ENCODE measurements at regions of chr11 and their contacts with region 1.

Region 1: DNA sequence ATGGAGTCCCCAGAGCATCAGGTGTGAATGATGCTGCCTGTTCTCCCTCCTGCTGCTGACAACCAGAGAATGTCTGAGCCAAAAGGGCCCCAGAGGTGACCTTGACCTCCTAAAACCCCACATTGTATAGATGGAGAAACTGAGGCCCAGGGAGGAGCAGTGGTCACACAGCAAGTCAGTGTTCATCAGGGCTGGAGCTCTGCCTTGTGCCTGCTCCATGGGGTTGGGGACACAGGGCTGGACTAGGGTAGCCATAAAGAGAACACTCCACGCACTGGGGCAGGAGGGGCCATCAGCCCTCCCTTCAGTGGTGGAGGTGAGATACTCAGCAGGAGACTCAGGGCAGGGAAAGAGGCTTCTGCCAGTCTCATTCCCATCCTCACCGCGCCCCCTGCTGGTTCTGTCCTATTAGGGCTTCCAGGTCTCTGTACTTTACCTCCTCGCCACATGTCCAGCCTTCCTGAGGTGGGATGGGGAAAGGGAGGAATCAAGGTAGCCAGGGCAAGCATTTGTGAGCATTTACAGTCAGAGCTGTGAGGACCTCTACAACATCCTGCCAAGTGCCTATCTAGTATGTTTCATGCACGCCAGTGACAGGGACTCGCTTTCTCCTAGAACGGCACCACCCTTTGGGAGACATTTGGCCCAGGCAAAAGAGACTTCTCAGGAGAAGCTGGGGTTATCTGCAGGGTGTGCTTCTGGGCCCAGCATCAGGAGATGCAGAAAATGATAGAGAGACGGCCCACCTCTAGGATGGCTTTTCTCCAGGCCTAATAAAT is 43.2 kb downstream of the NEU3 start:
- DNase-seq: peak; percentile 78
- ATAC-seq: peak; percentile 86
- H3K4me3 ChIP-seq: no peak overlapping the region
- H3K27ac ChIP-seq: peak overlapping the region; percentile 36; the same call in 1 of the 2 replicates
- H3K4me1 ChIP-seq: peaks cover 14% of the 10 kb centered on the region
- H3K27me3 ChIP-seq: peaks cover 9% of the 10 kb centered on the region
- CTCF ChIP-seq: peak; percentile 83
- POLR2A ChIP-seq: no peak
- RAD21 ChIP-seq: peak; percentile 73

Region 2: DNA sequence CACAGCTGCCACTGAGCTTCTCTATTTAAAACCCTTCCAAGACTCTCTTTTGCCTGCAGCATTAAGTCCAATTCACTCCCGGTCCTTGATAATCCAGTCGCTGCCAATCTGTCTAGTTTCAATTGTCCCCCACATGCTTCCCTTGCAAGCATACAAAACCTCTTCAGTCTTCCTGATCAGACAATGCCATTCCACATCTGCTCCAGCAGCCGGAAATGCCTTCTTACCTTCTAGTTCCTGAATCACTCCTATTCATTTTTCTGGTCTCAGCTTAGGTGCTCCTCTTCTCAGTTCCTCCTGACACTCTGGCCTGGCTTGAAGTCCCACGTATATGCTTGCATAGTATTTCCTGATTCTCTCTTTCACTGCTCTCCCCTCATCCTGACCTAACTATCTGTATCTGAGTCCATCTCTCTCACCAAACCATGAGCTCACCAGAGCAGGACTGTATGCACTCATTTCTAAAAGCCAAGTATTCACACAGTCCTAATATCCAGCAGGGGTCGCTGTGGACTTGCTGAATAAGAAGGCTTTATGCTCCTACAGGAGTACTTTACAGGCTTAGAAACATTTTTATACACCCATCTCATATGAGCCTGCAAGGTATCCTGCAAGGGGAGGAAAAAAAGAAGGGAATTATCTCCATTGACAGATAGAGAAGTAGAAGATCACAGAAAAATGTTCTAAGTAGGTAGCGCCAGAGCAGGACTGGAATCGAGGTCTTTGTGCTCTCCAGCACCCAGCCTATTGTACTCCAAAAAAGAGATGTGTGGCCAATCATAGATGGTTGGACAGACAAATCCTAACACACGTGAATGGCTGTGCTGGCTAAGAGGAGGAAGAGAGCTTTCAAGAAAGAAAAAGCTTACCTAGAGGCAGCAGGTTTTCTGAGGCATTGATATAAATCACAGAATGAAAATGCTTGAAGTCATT is 102.3 kb before region 1 on chr11:
- CTCF ChIA-PET with region 1: interaction called, 3 read pairs
- POLR2A ChIA-PET with region 1: no interaction called
- dilution Hi-C with region 1: no loop called
- in situ Hi-C with region 1: no loop called
- intact Hi-C with region 1: loop called (anchors 1 kb)
- DNase-seq: peak; percentile 95
- ATAC-seq: peak; percentile 81
- H3K4me3 ChIP-seq: no peak overlapping the region
- H3K27ac ChIP-seq: no peak overlapping the region
- H3K4me1 ChIP-seq: peaks cover 14% of the 10 kb centered on the region
- H3K27me3 ChIP-seq: no peaks in the 10 kb centered on the region
- CTCF ChIP-seq: peak; percentile 93
- POLR2A ChIP-seq: no peak
- RAD21 ChIP-seq: peak; percentile 92

Region 3: GRCh38 chr11:75063732-75064314 is 31.9 kb after region 1 on chr11:
- CTCF ChIA-PET with region 1: no interaction called
- POLR2A ChIA-PET with region 1: no interaction called
- dilution Hi-C with region 1: no loop called
- in situ Hi-C with region 1: no loop called
- intact Hi-C with region 1: no loop called
- DNase-seq: peak; percentile 10
- ATAC-seq: no peak
- H3K4me3 ChIP-seq: no peak overlapping the region
- H3K27ac ChIP-seq: no peak overlapping the region
- H3K4me1 ChIP-seq: no peaks in the 10 kb centered on the region
- H3K27me3 ChIP-seq: peaks cover 23% of the 10 kb centered on the region
- CTCF ChIP-seq: no peak
- POLR2A ChIP-seq: no peak
- RAD21 ChIP-seq: no peak

Measured in IMR-90 (cell line).